ENCODE measurements at regions of chr3 and their contacts with region 1.

Region 1: GRCh38 chr3:124761250-124761796 is 31.1 kb downstream of the UMPS start:
- DNase-seq: peak; percentile 27 to 95
- H3K4me3 ChIP-seq: no peak overlapping the region
- H3K27ac ChIP-seq: peak overlapping the region; percentile 64 to 74
- H3K4me1 ChIP-seq: peaks cover 0 to 10% of the 10 kb centered on the region in 2 donors
- H3K27me3 ChIP-seq: no peaks in the 10 kb centered on the region
- CTCF ChIP-seq: peak; percentile 92 to 97 (median 95)

Region 2: GRCh38 chr3:124786441-124787241 is 25.3 kb after region 1 on chr3:
- intact Hi-C with region 1: loop called (anchors 2 kb)
- DNase-seq: no peak
- H3K4me3 ChIP-seq: peak overlapping the region in 1 of 2 donors; percentile 11
- H3K27ac ChIP-seq: peak overlapping the region; percentile 53 to 90
- H3K4me1 ChIP-seq: peaks cover 19 to 67% of the 10 kb centered on the region in 2 donors
- H3K27me3 ChIP-seq: no peaks in the 10 kb centered on the region
- CTCF ChIP-seq: peak; percentile 32 to 54 (median 40)

Region 3: GRCh38 chr3:124860599-124860998 is 99.3 kb after region 1 on chr3:
- intact Hi-C with region 1: no loop called
- DNase-seq: peak; percentile 30 to 95
- H3K4me3 ChIP-seq: no peak overlapping the region
- H3K27ac ChIP-seq: peak overlapping the region; percentile 71 to 80
- H3K4me1 ChIP-seq: peaks cover 9 to 57% of the 10 kb centered on the region in 2 donors
- H3K27me3 ChIP-seq: no peaks in the 10 kb centered on the region
- CTCF ChIP-seq: no peak

Region 4: DNA sequence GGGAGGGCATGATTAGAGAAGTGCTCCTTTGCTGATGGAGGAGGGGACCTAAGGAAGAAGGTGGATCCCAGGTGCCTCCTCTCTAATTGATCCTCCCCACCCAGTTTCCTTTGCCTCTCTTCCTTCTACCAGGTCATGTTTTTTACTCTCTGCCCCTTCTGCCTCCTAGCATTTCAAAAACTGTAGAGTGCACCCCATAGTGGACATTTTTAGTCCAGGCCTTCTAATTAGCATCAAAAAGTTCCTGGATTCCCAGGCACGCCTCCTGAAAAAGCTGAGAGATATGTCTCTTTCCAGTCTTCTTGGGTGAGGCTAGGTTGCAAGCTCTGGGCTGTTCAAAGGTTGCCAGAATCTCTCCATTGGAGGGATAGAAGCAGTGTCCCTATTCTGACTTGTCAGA is 144.5 kb after region 1 on chr3:
- intact Hi-C with region 1: loop called (anchors 1 kb)
- DNase-seq: no peak
- H3K4me3 ChIP-seq: no peak overlapping the region
- H3K27ac ChIP-seq: no peak overlapping the region
- H3K4me1 ChIP-seq: peaks cover 0 to 5% of the 10 kb centered on the region in 2 donors
- H3K27me3 ChIP-seq: no peaks in the 10 kb centered on the region
- CTCF ChIP-seq: no peak

Region 5: DNA sequence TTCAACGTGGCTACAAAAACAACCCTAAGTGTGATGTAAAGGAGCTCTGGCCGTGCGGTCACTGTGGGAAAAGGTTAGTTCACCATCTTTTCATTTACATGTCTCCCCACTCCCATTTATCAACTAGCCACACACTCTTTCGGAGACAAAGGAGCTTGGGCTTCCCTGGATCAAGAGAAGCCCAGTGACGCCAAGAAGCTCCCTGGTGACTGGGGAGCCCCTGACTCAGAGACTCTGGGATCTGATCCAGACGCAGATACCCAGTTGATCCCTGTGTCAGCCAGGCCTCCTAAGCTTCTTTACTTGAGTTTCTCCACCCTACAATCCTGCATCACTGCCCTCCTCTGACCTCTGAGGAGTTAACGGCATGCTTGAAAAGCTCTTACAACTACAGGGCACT is 250.6 kb after region 1 on chr3:
- intact Hi-C with region 1: no loop called
- DNase-seq: no peak
- H3K4me3 ChIP-seq: no peak overlapping the region
- H3K27ac ChIP-seq: no peak overlapping the region
- H3K4me1 ChIP-seq: no peaks in the 10 kb centered on the region
- H3K27me3 ChIP-seq: no peaks in the 10 kb centered on the region
- CTCF ChIP-seq: no peak

Region 6: DNA sequence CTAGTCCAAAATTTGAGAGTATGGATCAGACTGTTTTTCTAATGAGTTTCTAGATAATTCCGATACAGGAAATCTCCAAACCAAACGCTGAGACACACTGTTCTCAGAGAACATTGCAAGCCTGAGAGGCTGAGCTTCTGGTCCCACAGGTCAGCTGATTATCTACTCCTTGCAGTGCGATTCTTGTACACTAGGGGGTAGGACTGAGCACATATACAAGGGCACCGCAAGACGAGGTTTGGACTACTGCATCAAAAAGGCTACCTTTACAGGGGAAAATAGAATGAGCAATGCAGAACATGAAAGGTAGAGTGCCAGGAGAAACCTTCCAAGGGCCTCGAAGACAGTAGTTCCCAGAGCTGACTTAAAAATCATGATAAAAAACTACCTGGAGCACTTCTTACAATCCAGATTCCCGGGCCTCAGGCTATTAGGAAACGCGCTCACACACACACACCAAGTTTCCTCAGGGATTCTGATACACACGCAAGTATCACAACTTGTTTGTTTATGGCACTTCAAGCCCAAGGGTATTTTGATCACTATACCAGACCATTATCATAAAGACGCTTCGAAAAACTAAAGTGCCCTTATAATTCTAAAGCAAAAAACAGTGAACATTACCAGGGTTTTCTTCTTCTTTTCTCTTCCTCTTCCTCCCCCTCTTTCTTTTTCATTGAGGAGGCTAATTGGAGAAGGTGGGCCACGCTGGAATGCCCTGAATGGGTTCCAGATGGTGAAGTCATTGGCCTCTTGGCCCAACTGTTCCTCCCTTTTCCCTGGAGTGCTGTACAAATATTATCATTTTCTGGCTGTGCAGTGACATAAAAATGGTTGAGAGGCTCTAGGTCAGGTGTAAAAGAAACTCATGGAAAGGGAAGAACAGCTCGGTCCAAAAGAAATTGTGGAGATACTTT is 389.5 kb after region 1 on chr3:
- intact Hi-C with region 1: no loop called
- DNase-seq: peak in 1 of 2 donors; percentile 73
- H3K4me3 ChIP-seq: no peak overlapping the region
- H3K27ac ChIP-seq: peak overlapping the region; percentile 55 to 69
- H3K4me1 ChIP-seq: peaks cover 5 to 28% of the 10 kb centered on the region in 2 donors
- H3K27me3 ChIP-seq: no peaks in the 10 kb centered on the region
- CTCF ChIP-seq: peak; percentile 15 to 43 (median 41)

Measured in ascending aorta (tissue), 2 donors.